ENCODE measurements at regions of chr21 and their contacts with region 1.

Region 1: DNA sequence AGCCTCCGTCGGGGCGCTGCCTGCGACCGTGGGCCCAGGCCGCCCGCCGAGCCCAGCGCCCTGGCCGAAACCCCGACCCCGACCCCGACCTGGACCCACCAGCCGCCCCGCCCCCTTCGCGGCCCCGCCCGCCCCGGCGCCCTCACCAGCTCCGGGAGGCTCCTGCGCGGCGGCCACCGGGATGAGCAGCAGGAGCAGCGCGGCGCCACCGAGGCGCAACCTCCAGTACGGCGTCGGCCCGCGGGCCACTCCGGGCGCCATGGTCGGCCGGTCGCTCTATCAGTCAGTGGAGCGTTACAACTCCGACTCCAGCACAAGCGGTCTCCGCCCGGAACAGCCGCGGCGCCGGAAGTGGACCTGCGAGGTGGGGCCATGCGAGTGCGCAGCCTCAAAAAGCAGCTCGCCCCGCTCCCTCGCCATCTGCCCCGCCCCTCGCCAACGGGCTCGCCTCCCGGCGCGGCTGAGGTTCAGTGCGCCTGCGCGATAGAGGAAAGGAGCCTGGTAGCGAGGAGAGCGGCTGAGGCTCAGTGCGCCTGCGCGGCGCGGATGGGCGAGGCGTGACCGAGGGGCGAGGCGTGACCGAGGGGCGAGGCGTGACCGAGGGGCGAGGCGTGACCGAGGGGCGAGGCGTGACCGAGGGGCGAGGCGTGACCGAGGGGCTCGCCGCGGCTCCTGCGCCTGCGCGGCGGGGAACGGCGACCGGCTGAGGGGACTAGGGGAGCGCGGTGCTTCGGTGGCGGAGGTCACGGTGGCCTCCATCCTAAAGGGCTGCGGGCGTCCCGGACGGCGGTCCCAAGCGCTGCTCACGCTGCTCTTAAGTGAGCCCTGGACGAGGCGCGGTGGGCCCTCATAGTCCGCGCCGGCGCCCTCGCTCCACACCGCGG is at the start of gene PTTG1IP:
- DNase-seq: peak; percentile 98
- H3K4me3 ChIP-seq: peak within 1 kb of the TSS; percentile 81
- H3K27ac ChIP-seq: peak within 1 kb of the TSS; percentile 20
- H3K4me1 ChIP-seq: peaks cover 30% of the 10 kb centered on the region
- CTCF ChIP-seq: no peak
- total RNA-seq, gene PTTG1IP: 38.3 and 38.9 TPM in 2 replicates

Region 2: GRCh38 chr21:44801468-44802395 is 71.9 kb before region 1 on chr21 and contains the start of gene UBE2G2:
- CTCF ChIA-PET with region 1: no interaction called
- POLR2A ChIA-PET with region 1: interaction called, 3 read pairs
- intact Hi-C with region 1: loop called (anchors 2 kb)
- DNase-seq: peak; percentile 86
- H3K4me3 ChIP-seq: peak within 1 kb of the TSS; percentile 81
- H3K27ac ChIP-seq: peak within 1 kb of the TSS; percentile 64
- H3K4me1 ChIP-seq: peaks cover 32% of the 10 kb centered on the region
- CTCF ChIP-seq: no peak
- total RNA-seq, gene UBE2G2: 104 and 121 TPM in 2 replicates

Region 3: GRCh38 chr21:44939532-44940115 is 66.0 kb after region 1 on chr21 and contains the start of gene SLX9:
- CTCF ChIA-PET with region 1: no interaction called
- POLR2A ChIA-PET with region 1: interaction called, 3 read pairs
- intact Hi-C with region 1: loop called (anchors 2 kb)
- DNase-seq: peak; percentile 90
- H3K4me3 ChIP-seq: peak within 1 kb of the TSS; percentile 98
- H3K27ac ChIP-seq: peak within 1 kb of the TSS; percentile 29
- H3K4me1 ChIP-seq: peaks cover 33% of the 10 kb centered on the region
- CTCF ChIP-seq: no peak
- total RNA-seq, gene SLX9: 18.6 and 37.0 TPM in 2 replicates

Region 4: DNA sequence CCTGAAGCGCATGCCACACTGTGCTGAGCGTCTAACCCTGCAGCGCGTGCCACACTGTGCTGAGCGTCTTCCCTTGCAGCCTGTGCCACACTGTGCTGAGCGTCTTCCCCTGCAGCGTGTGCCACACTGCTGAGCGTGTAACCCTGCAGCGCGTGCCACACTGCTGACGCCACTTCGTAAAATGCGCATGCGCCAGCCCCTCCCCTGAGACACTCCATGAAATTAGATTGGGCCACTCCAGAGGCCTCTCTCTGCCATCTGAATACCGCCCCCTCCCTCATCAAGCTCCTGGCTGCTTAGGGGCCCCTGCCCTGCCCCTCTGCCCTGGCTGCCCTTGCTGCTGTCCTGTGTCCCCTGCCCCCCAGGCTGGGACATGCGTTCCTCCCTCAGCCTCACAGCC is 329.3 kb after region 1 on chr21:
- CTCF ChIA-PET with region 1: no interaction called
- POLR2A ChIA-PET with region 1: no interaction called
- intact Hi-C with region 1: no loop called
- DNase-seq: no peak
- H3K4me3 ChIP-seq: no peak overlapping the region
- H3K27ac ChIP-seq: no peak overlapping the region
- H3K4me1 ChIP-seq: no peaks in the 10 kb centered on the region
- CTCF ChIP-seq: no peak

Measured in OCI-LY7 (cell line).